ENCODE measurements at regions of chr6 and their contacts with region 1.

Region 1: DNA sequence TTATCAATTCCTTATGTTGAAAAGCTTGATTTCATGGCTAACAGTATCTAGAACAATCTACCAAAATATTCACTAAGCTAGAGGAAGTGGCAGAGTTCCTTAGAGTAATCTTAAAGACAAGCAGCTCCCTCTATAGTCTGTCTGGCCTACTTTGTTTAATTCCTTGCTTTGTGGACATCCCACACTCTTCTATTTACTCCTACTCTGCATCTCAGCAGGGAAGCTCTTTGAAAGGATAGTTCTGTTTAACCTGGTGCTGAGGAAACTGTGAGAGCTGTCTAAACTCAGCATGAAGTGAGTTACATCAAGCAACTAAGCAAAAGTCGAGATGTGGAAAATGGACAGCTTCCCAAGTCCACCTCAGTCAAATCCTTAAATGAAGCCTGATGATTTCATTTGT is 4.3 kb downstream of the REV3L start:
- DNase-seq: peak; percentile 49
- ATAC-seq: peak; percentile 60
- H3K4me3 ChIP-seq: 0 out of 2 replicates have a peak overlapping the region, but pooled peaks have one; percentile 0
- H3K27ac ChIP-seq: peak overlapping the region; percentile 5
- H3K4me1 ChIP-seq: peaks cover 12% of the 10 kb centered on the region; the same call in 1 of the 2 replicates
- H3K27me3 ChIP-seq: no peaks in the 10 kb centered on the region
- CTCF ChIP-seq: peak; percentile 33 to 71 (median 63); a peak in 4 of 6 replicates
- EP300 ChIP-seq: no peak
- POLR2A ChIP-seq: no peak
- RAD21 ChIP-seq: peak; percentile 70

Region 2: GRCh38 chr6:110284855-110285254 is 1193.9 kb before region 1 on chr6:
- CTCF ChIA-PET with region 1: no interaction called
- POLR2A ChIA-PET with region 1: no interaction called
- RAD21 ChIA-PET with region 1: no interaction called
- SMC1A ChIA-PET with region 1: no interaction called
- in situ Hi-C with region 1: no loop called
- intact Hi-C with region 1: no loop called
- DNase-seq: no peak
- ATAC-seq: no peak
- H3K4me3 ChIP-seq: no peak overlapping the region
- H3K27ac ChIP-seq: no peak overlapping the region
- H3K4me1 ChIP-seq: no peaks in the 10 kb centered on the region
- H3K27me3 ChIP-seq: peaks cover 0 to 2% of the 10 kb centered on the region in 2 experiments; a peak in 1 of 4 replicates
- CTCF ChIP-seq: no peak
- EP300 ChIP-seq: no peak
- POLR2A ChIP-seq: no peak
- RAD21 ChIP-seq: no peak

Region 3: DNA sequence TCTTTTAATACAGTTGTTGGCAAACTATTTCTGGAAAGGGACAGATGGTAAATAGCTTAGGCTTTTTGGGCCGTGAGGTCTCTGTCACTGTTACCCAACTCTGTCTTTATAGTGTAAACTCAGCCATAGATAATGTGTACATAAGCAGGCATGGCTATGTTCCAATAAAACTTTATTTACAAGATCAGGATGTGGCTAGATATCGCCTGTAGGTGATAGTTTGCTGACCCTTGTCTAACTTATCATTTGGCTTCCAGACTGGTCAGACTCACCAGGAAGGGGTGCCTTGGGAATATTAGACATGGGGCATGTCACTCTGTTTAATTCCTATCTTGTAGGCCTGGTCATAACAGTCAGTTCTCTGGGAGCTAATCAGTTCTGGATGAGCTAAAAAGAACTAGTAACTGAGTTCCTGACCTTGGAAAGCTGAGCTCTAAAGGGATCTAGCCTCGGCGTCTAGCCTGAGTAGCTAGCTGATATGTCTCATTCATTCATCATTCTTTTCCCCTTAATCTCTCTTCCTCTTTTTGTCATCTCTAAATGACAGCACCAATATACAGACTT is 227.9 kb before region 1 on chr6:
- CTCF ChIA-PET with region 1: interaction called, 17 read pairs
- POLR2A ChIA-PET with region 1: interaction called, 3 read pairs
- RAD21 ChIA-PET with region 1: interaction called, 4 read pairs
- SMC1A ChIA-PET with region 1: interaction called, 10 read pairs
- in situ Hi-C with region 1: no loop called
- intact Hi-C with region 1: no loop called
- DNase-seq: no peak
- ATAC-seq: peak; percentile 84
- H3K4me3 ChIP-seq: no peak overlapping the region
- H3K27ac ChIP-seq: no peak overlapping the region
- H3K4me1 ChIP-seq: no peaks in the 10 kb centered on the region
- H3K27me3 ChIP-seq: no peaks in the 10 kb centered on the region
- CTCF ChIP-seq: no peak
- EP300 ChIP-seq: no peak
- POLR2A ChIP-seq: no peak
- RAD21 ChIP-seq: no peak

Region 4: GRCh38 chr6:111338843-111339242 is 139.9 kb before region 1 on chr6:
- CTCF ChIA-PET with region 1: interaction called, 15 read pairs
- POLR2A ChIA-PET with region 1: interaction called, 6 read pairs
- RAD21 ChIA-PET with region 1: interaction called, 23 read pairs
- SMC1A ChIA-PET with region 1: interaction called, 11 read pairs
- in situ Hi-C with region 1: no loop called
- intact Hi-C with region 1: no loop called
- DNase-seq: peak; percentile 78
- ATAC-seq: peak; percentile 99
- H3K4me3 ChIP-seq: no peak overlapping the region
- H3K27ac ChIP-seq: peak overlapping the region; percentile 16
- H3K4me1 ChIP-seq: no peaks in the 10 kb centered on the region
- H3K27me3 ChIP-seq: no peaks in the 10 kb centered on the region
- CTCF ChIP-seq: no peak
- EP300 ChIP-seq: peak; percentile 35 to 74; a peak in 2 of 4 replicates
- POLR2A ChIP-seq: no peak
- RAD21 ChIP-seq: no peak

Region 5: GRCh38 chr6:111367393-111368088 is 111.2 kb before region 1 on chr6:
- CTCF ChIA-PET with region 1: interaction called, 24 read pairs
- POLR2A ChIA-PET with region 1: interaction called, 3 read pairs
- RAD21 ChIA-PET with region 1: interaction called, 21 read pairs
- SMC1A ChIA-PET with region 1: interaction called, 10 read pairs
- in situ Hi-C with region 1: no loop called
- intact Hi-C with region 1: loop called (anchors 5 kb)
- DNase-seq: peak; percentile 32
- ATAC-seq: peak; percentile 83
- H3K4me3 ChIP-seq: no peak overlapping the region
- H3K27ac ChIP-seq: no peak overlapping the region
- H3K4me1 ChIP-seq: peaks cover 12% of the 10 kb centered on the region
- H3K27me3 ChIP-seq: no peaks in the 10 kb centered on the region
- CTCF ChIP-seq: no peak
- EP300 ChIP-seq: no peak
- POLR2A ChIP-seq: no peak
- RAD21 ChIP-seq: no peak

Region 6: GRCh38 chr6:111406200-111406721 is 72.5 kb before region 1 on chr6:
- CTCF ChIA-PET with region 1: interaction called, 20 read pairs
- POLR2A ChIA-PET with region 1: interaction called, 10 read pairs
- RAD21 ChIA-PET with region 1: interaction called, 62 read pairs
- SMC1A ChIA-PET with region 1: interaction called, 49 read pairs
- in situ Hi-C with region 1: no loop called
- intact Hi-C with region 1: loop called (anchors 5 kb)
- DNase-seq: peak; percentile 96
- ATAC-seq: peak; percentile 94
- H3K4me3 ChIP-seq: no peak overlapping the region
- H3K27ac ChIP-seq: peak overlapping the region; percentile 59
- H3K4me1 ChIP-seq: peaks cover 28% of the 10 kb centered on the region
- H3K27me3 ChIP-seq: no peaks in the 10 kb centered on the region
- CTCF ChIP-seq: no peak
- EP300 ChIP-seq: peak; percentile 98 to 100; a peak in 3 of 4 replicates
- POLR2A ChIP-seq: no peak
- RAD21 ChIP-seq: peak; percentile 37; the same call in 1 of the 2 replicates

Region 7: GRCh38 chr6:111462770-111463391 is 15.9 kb before region 1 on chr6:
- CTCF ChIA-PET with region 1: interaction called, 11 read pairs
- POLR2A ChIA-PET with region 1: interaction called, 9 read pairs
- RAD21 ChIA-PET with region 1: interaction called, 16 read pairs
- SMC1A ChIA-PET with region 1: interaction called, 24 read pairs
- in situ Hi-C with region 1: no loop called
- intact Hi-C with region 1: no loop called
- DNase-seq: no peak
- ATAC-seq: peak; percentile 50
- H3K4me3 ChIP-seq: no peak overlapping the region
- H3K27ac ChIP-seq: no peak overlapping the region
- H3K4me1 ChIP-seq: no peaks in the 10 kb centered on the region
- H3K27me3 ChIP-seq: no peaks in the 10 kb centered on the region
- CTCF ChIP-seq: no peak
- EP300 ChIP-seq: no peak
- POLR2A ChIP-seq: no peak
- RAD21 ChIP-seq: no peak

Region 8: DNA sequence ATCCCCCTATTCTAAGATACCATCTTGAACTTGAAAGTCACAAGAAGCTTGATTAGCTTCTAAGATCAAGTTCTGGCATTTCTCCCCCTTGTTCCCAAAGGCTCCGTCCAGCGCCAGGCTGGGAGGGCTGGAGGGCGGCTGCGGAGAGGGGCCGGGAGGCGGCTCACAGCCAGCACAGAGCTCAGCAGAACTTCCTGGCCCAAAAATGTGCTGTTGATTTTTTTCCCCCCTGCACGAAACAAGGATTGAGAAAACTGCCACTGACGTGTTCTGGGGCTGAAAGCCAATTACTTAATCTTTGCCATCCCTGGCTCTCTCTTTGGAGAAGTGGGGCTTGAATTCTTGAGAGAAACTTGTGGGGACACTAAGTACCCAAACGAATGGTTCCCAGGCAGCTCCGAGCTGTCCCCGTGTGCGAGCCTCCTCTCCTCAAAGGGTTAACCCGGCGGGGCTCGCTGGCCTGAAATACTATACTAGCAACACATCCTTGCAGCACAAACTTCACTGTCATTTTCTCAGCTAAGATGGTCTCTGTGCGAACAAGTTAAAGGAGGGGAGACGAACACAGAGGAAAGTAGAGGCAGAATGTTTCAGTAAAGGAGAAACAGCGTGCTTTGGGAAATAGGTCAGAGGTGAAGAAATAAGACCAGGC is 126.5 kb after region 1 on chr6:
- CTCF ChIA-PET with region 1: interaction called, 9 read pairs
- POLR2A ChIA-PET with region 1: interaction called, 8 read pairs
- RAD21 ChIA-PET with region 1: interaction called, 30 read pairs
- SMC1A ChIA-PET with region 1: interaction called, 12 read pairs
- in situ Hi-C with region 1: no loop called
- intact Hi-C with region 1: loop called (anchors 2 kb)
- DNase-seq: no peak
- ATAC-seq: peak; percentile 65
- H3K4me3 ChIP-seq: peak overlapping the region; percentile 74
- H3K27ac ChIP-seq: peak overlapping the region; percentile 87
- H3K4me1 ChIP-seq: peaks cover 11% of the 10 kb centered on the region; the same call in 1 of the 2 replicates
- H3K27me3 ChIP-seq: no peaks in the 10 kb centered on the region
- CTCF ChIP-seq: no peak
- EP300 ChIP-seq: no peak
- POLR2A ChIP-seq: no peak
- RAD21 ChIP-seq: no peak

Region 9: DNA sequence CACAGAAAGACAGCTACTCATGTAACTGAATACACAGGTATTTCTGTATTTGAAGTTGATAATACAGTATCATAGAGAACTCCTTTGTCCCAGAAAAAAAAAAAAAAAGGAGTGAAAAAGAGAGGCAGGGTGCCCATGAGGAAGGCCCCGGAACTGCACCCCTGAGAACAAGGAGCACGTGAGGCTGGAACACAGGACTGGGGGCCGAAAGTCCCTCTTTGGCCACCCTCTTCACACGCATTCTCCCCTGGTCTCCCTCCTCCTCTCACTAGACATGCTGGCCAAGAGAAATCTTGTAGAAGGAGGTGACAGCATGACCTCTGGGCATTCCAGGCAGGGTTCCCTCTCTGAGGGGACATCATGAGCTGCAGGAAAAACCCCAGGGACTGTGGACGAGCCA is 189.7 kb after region 1 on chr6:
- CTCF ChIA-PET with region 1: no interaction called
- POLR2A ChIA-PET with region 1: no interaction called
- RAD21 ChIA-PET with region 1: no interaction called
- SMC1A ChIA-PET with region 1: no interaction called
- in situ Hi-C with region 1: no loop called
- intact Hi-C with region 1: no loop called
- DNase-seq: no peak
- ATAC-seq: peak; percentile 36; the same call in 2 of the 3 replicates
- H3K4me3 ChIP-seq: no peak overlapping the region
- H3K27ac ChIP-seq: no peak overlapping the region
- H3K4me1 ChIP-seq: no peaks in the 10 kb centered on the region
- H3K27me3 ChIP-seq: no peaks in the 10 kb centered on the region
- CTCF ChIP-seq: peak in 2 of 3 experiments; percentile 22 to 29; a peak in 2 of 6 replicates
- EP300 ChIP-seq: no peak
- POLR2A ChIP-seq: no peak
- RAD21 ChIP-seq: no peak

Region 10: DNA sequence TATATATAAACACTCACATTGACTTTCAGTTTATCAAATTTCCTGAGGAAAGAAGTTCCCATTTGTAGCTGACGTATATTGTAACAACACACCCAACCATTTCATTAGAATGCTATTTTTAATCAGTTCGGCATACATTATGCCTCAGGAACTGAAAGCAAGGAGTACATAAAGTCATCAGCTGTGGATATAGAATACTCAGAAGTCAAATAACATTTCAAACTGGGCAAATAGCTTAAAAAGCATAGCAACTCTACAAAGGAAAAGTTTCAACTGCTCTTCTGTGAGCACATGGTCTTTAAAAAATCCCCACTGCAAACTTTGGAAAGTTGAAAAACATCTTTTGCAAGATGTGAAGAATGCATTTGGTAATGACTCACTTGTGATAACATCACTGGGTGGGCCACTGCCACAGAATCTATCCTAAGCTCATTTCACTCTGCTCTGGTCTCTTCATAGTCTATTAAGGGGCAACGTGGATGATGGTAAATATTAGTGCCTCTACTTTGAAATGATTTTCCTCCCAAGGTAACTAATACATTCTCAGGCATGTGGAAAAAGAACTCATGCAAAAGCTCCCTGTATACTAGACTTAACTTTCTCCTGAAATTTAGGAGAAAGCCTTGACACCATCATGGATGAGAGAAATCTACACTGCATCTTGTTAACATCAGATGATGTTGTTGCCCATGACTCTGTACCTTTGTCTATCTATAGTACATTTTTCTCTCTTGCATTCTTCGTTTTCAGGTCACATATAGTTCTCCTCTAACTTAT is 345.3 kb after region 1 on chr6:
- CTCF ChIA-PET with region 1: no interaction called
- POLR2A ChIA-PET with region 1: no interaction called
- RAD21 ChIA-PET with region 1: no interaction called
- SMC1A ChIA-PET with region 1: no interaction called
- in situ Hi-C with region 1: no loop called
- intact Hi-C with region 1: no loop called
- DNase-seq: no peak
- ATAC-seq: peak; percentile 73
- H3K4me3 ChIP-seq: peak overlapping the region; percentile 45
- H3K27ac ChIP-seq: peak overlapping the region; percentile 57
- H3K4me1 ChIP-seq: peaks cover 32% of the 10 kb centered on the region
- H3K27me3 ChIP-seq: no peaks in the 10 kb centered on the region
- CTCF ChIP-seq: no peak
- EP300 ChIP-seq: no peak
- POLR2A ChIP-seq: no peak
- RAD21 ChIP-seq: no peak

Region 11: DNA sequence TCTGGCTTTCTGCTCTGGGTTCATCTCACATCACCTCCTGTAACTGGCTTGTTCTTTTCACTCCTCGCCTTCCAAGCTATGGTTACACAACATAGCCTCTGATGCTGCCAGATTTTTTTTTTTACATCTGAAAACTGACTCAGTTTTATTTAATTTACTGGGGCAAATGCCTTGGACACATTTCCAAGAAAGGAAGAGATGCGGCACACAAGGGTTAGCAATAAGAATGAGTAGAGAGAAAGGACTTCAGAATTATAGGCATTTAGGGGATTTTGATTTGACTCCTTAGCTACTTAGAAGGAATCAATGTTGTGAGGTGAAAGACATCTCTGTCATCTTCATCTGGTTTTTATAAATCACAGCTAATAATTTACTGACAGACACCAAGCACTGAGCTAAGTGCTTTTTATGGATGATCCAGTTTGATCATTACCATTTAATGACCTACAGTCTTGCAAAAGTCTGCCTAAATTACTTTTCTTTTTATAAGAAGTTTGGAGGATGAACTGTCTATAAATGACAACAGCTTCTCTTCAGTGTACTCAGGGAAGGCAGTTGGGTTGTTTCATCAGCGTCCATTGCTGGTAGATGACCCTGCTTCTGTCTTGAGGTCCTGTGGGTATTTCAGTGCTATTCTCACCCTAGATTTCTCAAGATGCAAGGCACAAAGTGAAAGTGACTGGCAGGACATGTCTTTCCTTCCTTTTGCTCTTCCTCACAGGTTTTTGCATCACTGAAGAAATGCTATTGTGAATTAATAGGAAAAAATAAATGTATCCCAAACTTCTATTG is 744.5 kb after region 1 on chr6:
- CTCF ChIA-PET with region 1: no interaction called
- POLR2A ChIA-PET with region 1: no interaction called
- RAD21 ChIA-PET with region 1: no interaction called
- SMC1A ChIA-PET with region 1: no interaction called
- in situ Hi-C with region 1: no loop called
- intact Hi-C with region 1: no loop called
- DNase-seq: no peak
- ATAC-seq: no peak
- H3K4me3 ChIP-seq: no peak overlapping the region
- H3K27ac ChIP-seq: no peak overlapping the region
- H3K4me1 ChIP-seq: no peaks in the 10 kb centered on the region
- H3K27me3 ChIP-seq: no peaks in the 10 kb centered on the region; a peak in 1 of 4 replicates
- CTCF ChIP-seq: no peak
- EP300 ChIP-seq: no peak
- POLR2A ChIP-seq: no peak
- RAD21 ChIP-seq: no peak

Measured in GM12878 (cell line).